Ovary (tissue), 10 donors: ENCODE measurements at regions of chr12 and their contacts with region 1.

Region 1: DNA sequence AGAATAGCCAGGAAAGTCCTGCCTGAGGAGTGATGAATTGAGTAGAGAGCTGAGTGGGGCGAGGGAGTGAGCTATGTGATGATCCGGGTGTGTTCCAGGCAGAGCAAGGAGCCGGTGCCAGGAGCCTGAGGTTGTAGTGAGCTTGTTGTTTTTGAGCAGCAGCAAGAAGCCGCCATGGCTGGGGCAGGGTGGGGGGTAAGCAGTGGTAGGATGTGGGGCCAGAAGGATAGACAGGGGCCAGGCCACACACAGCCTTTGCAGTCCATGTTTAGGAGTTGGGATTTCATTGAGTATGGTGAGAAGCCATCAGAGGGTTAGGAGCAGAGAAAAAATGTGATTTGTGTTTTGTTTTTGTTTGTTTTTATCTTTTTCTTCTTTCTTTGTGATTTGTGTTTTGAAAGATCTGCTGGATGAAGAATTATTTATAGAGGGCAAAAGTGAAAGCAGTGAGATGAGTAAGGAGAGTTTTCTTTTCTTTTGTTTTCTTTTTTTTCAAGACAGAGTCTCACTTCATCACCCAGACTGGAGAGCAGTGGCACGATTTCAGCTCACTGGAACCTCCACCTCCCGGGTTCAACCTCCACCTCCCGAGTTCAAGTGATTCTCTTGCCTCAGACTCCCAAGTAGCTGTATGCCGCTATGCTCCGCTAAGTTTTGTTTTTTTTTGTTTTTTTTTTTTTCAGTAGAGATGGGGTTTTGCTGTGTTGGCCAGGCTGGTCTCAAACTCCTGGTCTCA is 92.3 kb upstream of the BCAT1 start:
- DNase-seq: no peak
- H3K4me3 ChIP-seq: no peak overlapping the region
- H3K27ac ChIP-seq: no peak overlapping the region
- H3K4me1 ChIP-seq: no peaks in the 10 kb centered on the region
- H3K27me3 ChIP-seq: no peaks in the 10 kb centered on the region
- CTCF ChIP-seq: no peak
- EP300 ChIP-seq: no peak
- POLR2A ChIP-seq: no peak

Region 2: GRCh38 chr12:24902511-24903328 is 138.5 kb before region 1 on chr12:
- intact Hi-C with region 1: no loop called
- DNase-seq: no peak
- H3K4me3 ChIP-seq: peak overlapping the region; percentile 16
- H3K27ac ChIP-seq: no peak overlapping the region
- H3K4me1 ChIP-seq: peaks cover 3% of the 10 kb centered on the region
- H3K27me3 ChIP-seq: no peaks in the 10 kb centered on the region
- CTCF ChIP-seq: no peak
- EP300 ChIP-seq: no peak
- POLR2A ChIP-seq: no peak

Region 3: GRCh38 chr12:25063873-25064628 is 22.9 kb after region 1 on chr12:
- intact Hi-C with region 1: loop called in 1 of 4 experiments (anchors 2 kb)
- DNase-seq: no peak
- H3K4me3 ChIP-seq: no peak overlapping the region
- H3K27ac ChIP-seq: no peak overlapping the region
- H3K4me1 ChIP-seq: no peaks in the 10 kb centered on the region
- H3K27me3 ChIP-seq: no peaks in the 10 kb centered on the region
- CTCF ChIP-seq: no peak
- EP300 ChIP-seq: no peak
- POLR2A ChIP-seq: no peak